ENCODE measurements at regions of chr16 and their contacts with region 1.

Region 1: DNA sequence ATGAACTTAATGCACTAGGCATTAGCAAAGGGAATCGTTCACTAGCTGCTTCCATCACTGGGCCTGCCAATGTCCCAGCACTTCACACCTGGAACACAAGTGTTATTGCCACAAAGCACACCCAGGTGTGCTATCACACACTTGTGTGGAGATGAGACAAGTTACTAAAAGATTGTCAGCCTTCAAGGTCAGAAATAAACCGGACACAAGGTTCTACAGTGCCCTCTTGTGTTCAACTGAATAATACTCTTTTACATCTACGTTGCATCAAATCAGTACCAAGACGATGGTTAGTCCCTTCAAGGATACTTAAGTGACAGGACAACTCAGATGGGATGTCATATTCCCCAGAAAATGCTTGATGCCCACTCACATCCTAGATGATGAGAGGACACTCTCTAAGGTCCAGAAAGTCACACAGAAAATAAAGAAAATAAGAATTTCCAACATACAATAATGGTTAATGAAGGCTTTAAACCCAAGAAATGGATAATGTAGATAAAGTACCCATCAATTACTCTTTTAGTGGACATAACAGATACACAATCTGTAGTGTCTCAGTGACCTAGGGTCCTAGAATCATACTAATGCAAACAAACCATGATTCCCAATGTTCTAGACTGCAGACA is 16.4 kb upstream of the GLG1 start:
- DNase-seq: peak in 1 of 2 donors; percentile 3
- H3K4me3 ChIP-seq: no peak overlapping the region
- H3K27ac ChIP-seq: no peak overlapping the region
- H3K4me1 ChIP-seq: no peaks in the 10 kb centered on the region
- H3K27me3 ChIP-seq: no peaks in the 10 kb centered on the region
- CTCF ChIP-seq: peak; percentile 56 to 58

Region 2: DNA sequence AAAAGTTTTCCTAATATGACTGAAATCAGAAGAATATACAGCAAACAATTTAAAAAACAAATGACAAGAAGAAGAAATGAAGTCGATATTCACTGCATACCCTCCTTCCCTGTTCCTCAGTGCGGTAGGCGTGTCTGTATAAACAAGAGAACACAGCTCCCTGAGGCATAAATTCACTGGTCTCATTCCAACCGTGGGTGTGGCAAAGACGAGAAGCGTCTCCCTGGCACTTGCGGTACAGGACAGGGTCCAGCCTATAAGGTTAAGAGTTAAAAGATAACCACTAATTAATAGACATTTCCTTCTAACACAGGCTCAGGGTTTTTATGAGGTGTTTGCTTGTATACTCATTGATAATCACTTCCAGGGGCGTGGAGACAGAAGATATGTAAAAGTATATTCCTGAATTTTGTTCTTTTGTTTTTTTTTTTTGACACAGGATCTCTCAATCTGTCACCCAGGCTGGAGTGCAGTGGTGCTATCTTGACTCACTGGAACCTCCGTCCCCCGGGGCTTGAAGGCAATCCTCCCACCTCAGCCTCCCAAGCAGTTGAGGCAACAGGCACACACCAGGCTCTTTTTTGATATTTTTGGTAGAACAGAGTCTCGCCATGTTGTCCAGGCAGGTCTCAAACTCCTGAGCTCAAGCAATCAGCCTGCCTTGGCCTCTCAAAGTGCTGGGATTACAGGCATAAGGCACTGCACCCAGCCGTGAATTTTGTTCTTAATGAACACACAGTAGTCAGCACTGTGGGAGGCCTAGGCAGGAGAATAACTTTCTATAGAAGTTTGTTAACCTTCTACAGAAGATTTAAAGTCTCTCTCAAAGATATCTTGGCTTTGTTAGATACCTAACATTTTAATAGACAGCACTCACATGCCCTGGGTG is 142.9 kb before region 1 on chr16:
- intact Hi-C with region 1: loop called (anchors 10 kb)
- DNase-seq: peak in 1 of 2 donors; percentile 57
- H3K4me3 ChIP-seq: no peak overlapping the region
- H3K27ac ChIP-seq: peak overlapping the region in 1 of 2 donors; percentile 13
- H3K4me1 ChIP-seq: peaks cover 0 to 14% (median 9%) of the 10 kb centered on the region in 4 donors
- H3K27me3 ChIP-seq: no peaks in the 10 kb centered on the region
- CTCF ChIP-seq: no peak

Region 3: GRCh38 chr16:74684131-74684530 is 60.8 kb after region 1 on chr16:
- intact Hi-C with region 1: no loop called
- DNase-seq: no peak
- H3K4me3 ChIP-seq: no peak overlapping the region
- H3K27ac ChIP-seq: no peak overlapping the region
- H3K4me1 ChIP-seq: no peaks in the 10 kb centered on the region
- H3K27me3 ChIP-seq: no peaks in the 10 kb centered on the region
- CTCF ChIP-seq: no peak

Region 4: GRCh38 chr16:76389126-76389525 is 1765.8 kb after region 1 on chr16:
- intact Hi-C with region 1: no loop called
- DNase-seq: no peak
- H3K4me3 ChIP-seq: no peak overlapping the region
- H3K27ac ChIP-seq: no peak overlapping the region
- H3K4me1 ChIP-seq: no peaks in the 10 kb centered on the region
- H3K27me3 ChIP-seq: no peaks in the 10 kb centered on the region
- CTCF ChIP-seq: no peak

Measured in tibial artery (tissue), 4 donors.